ENCODE measurements at regions of chr4 and their contacts with region 1.

Region 1: GRCh38 chr4:113732967-113733527 is 28.5 kb downstream of the CAMK2D start:
- DNase-seq: no peak
- H3K4me3 Mint-ChIP-seq: no peak overlapping the region
- H3K27ac Mint-ChIP-seq: no peak overlapping the region
- H3K4me1 Mint-ChIP-seq: peaks cover 52% of the 10 kb centered on the region
- H3K27me3 Mint-ChIP-seq: no peaks in the 10 kb centered on the region

Region 2: GRCh38 chr4:113435893-113436292 is 297.2 kb before region 1 on chr4:
- intact Hi-C with region 1: no loop called
- DNase-seq: no peak
- H3K4me3 Mint-ChIP-seq: no peak overlapping the region
- H3K27ac Mint-ChIP-seq: no peak overlapping the region
- H3K4me1 Mint-ChIP-seq: peaks cover 12% of the 10 kb centered on the region
- H3K27me3 Mint-ChIP-seq: no peaks in the 10 kb centered on the region

Region 3: GRCh38 chr4:113499696-113500095 is 233.4 kb before region 1 on chr4:
- intact Hi-C with region 1: no loop called
- DNase-seq: no peak
- H3K4me3 Mint-ChIP-seq: no peak overlapping the region
- H3K27ac Mint-ChIP-seq: no peak overlapping the region
- H3K4me1 Mint-ChIP-seq: no peaks in the 10 kb centered on the region
- H3K27me3 Mint-ChIP-seq: no peaks in the 10 kb centered on the region

Region 4: GRCh38 chr4:113607998-113608397 is 125.0 kb before region 1 on chr4:
- intact Hi-C with region 1: no loop called
- DNase-seq: no peak
- H3K4me3 Mint-ChIP-seq: no peak overlapping the region
- H3K27ac Mint-ChIP-seq: no peak overlapping the region
- H3K4me1 Mint-ChIP-seq: peaks cover 25% of the 10 kb centered on the region
- H3K27me3 Mint-ChIP-seq: no peaks in the 10 kb centered on the region

Region 5: GRCh38 chr4:113673450-113673849 is 59.6 kb before region 1 on chr4:
- intact Hi-C with region 1: no loop called
- DNase-seq: peak; percentile 19
- H3K4me3 Mint-ChIP-seq: no peak overlapping the region
- H3K27ac Mint-ChIP-seq: peak overlapping the region; percentile 47
- H3K4me1 Mint-ChIP-seq: peaks cover 45% of the 10 kb centered on the region
- H3K27me3 Mint-ChIP-seq: no peaks in the 10 kb centered on the region

Region 6: GRCh38 chr4:113695328-113696169 is 37.5 kb before region 1 on chr4:
- intact Hi-C with region 1: loop called (anchors 5 kb)
- DNase-seq: no peak
- H3K4me3 Mint-ChIP-seq: no peak overlapping the region
- H3K27ac Mint-ChIP-seq: no peak overlapping the region
- H3K4me1 Mint-ChIP-seq: peaks cover 40% of the 10 kb centered on the region
- H3K27me3 Mint-ChIP-seq: no peaks in the 10 kb centered on the region

Region 7: DNA sequence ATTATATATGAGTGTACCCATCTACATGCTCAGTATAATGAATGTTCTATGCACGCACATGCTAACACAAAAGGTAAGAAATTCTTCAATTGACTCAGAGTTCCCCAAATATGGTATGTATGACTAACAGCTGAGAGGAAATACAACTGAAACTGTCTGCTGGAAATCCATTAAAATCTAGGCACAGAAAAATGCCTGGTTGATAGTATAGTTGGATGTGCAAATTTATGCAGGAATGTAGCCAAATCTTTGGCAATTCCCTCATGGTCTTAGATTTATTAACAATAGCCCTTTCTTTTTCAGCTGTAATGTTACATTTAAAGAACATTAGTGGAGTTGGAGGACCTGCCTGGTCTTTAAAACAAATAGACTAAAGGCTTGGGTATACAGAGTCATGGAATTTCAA is 23.0 kb after region 1 on chr4:
- intact Hi-C with region 1: loop called (anchors 2 kb)
- DNase-seq: no peak
- H3K4me3 Mint-ChIP-seq: peak overlapping the region; percentile 10
- H3K27ac Mint-ChIP-seq: peak overlapping the region; percentile 40
- H3K4me1 Mint-ChIP-seq: peaks cover 38% of the 10 kb centered on the region
- H3K27me3 Mint-ChIP-seq: no peaks in the 10 kb centered on the region